ENCODE measurements at regions of chr5 and their contacts with region 1.

Region 1: DNA sequence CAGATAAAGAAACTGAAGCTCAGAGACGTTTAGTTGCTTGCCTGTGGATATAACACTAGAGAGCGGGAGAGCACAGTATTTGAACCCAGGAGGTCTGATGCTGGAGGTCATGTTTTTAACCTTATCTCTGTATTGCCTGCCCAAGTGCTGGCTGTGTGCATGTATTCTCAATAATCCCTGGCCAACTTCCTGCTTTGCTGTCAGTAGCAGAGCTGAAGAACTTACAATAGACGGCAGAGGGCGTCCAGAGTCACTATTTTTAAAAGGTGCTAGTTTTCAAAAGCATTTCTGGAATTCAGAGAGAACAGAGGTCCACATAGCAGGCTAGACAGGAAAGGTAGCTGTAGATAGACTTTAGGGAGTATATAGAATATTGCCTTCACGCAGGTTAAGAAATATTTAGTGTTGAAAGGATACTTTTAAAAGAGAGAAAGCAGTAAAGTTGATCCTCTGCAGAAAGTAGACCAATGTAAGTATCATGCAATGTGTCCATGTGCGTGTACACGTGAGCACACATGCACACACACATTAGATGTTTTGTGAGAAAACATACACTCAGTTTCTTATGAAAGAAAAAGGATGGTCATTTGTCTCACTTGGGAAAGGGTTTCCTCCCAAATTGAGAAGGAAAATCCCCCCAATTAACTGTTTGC is 46.3 kb downstream of the PTCD2 start:
- DNase-seq: peak; percentile 87
- H3K4me3 ChIP-seq: no peak overlapping the region
- H3K27ac ChIP-seq: peak overlapping the region; percentile 23
- H3K4me1 ChIP-seq: peaks cover 23% of the 10 kb centered on the region
- H3K27me3 ChIP-seq: no peaks in the 10 kb centered on the region
- CTCF ChIP-seq: peak; percentile 66 to 76
- POLR2A ChIP-seq: no peak

Region 2: GRCh38 chr5:72093217-72093616 is 273.2 kb before region 1 on chr5:
- CTCF ChIA-PET with region 1: no interaction called
- POLR2A ChIA-PET with region 1: no interaction called
- dilution Hi-C with region 1: no loop called
- intact Hi-C with region 1: no loop called
- DNase-seq: no peak
- H3K4me3 ChIP-seq: no peak overlapping the region
- H3K27ac ChIP-seq: no peak overlapping the region
- H3K4me1 ChIP-seq: no peaks in the 10 kb centered on the region
- H3K27me3 ChIP-seq: peaks cover 2 to 4% of the 10 kb centered on the region in 2 experiments
- CTCF ChIP-seq: no peak
- POLR2A ChIP-seq: no peak

Region 3: DNA sequence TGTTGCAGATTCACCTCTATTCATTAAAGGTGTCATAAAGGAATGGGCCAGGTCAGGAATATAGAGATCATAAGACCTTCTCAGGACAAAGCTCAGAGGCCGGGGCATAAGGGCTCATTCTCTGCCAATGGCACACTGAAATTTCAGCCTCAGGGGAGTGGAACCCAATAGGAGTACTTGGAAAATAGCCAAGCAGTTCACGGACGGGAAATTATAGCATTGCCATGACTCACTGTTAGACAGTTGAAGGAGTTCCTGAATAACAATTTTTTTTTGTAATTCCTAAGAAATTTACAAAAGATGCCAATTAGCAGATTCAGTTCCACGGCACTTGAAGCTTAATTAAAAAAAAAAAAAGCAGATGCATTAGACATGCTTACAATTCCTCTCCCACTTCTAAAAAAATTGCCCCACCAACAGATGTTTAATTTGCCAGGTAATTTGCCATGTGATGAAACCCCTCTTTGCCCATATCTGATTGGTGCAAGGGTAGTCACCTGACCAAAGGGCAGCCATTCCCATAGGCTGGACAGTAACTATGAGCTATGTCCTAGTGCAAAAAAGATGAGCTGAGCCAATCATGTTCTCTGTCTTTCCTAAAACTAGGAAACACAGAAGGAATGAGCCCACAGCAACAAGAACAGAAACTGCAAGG is 12.3 kb after region 1 on chr5:
- CTCF ChIA-PET with region 1: interaction called, 29 read pairs
- POLR2A ChIA-PET with region 1: no interaction called
- dilution Hi-C with region 1: no loop called
- intact Hi-C with region 1: no loop called
- DNase-seq: peak; percentile 96
- H3K4me3 ChIP-seq: no peak overlapping the region
- H3K27ac ChIP-seq: peak overlapping the region; percentile 30
- H3K4me1 ChIP-seq: peaks cover 15% of the 10 kb centered on the region
- H3K27me3 ChIP-seq: no peaks in the 10 kb centered on the region
- CTCF ChIP-seq: no peak
- POLR2A ChIP-seq: no peak

Region 4: DNA sequence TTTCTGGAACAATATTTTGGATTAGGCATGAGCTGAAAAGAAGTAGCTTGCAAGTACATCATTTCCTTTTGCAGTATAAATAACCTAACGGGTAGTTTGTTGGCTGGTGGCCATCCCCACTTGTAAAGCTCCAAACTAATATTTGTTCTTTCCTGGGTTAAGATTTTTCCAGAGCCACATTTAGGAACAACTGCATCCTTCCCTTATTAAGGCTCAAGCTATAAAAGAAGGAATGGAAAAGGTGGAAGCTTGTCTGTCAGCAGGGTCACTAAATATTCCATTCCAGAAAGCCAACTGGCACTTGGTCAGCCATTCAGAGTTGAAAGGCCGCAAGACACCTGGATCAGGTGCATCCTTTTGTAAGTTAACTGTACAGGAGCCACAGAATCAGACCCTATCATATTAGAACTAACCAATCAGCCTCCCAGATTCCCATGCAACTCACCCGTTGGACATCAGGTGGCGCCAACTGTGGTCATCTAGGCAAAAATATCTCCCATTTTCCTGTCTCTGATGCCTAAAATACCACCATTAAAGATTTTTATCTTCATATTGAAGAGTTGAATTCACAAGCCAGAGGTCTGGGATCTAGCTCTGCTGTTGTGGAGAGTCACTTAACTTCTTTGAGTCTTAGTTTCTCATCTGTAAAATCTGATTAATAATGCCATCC is 36.6 kb after region 1 on chr5:
- CTCF ChIA-PET with region 1: interaction called, 11 read pairs
- POLR2A ChIA-PET with region 1: no interaction called
- dilution Hi-C with region 1: no loop called
- intact Hi-C with region 1: no loop called
- DNase-seq: peak; percentile 78
- H3K4me3 ChIP-seq: no peak overlapping the region
- H3K27ac ChIP-seq: no peak overlapping the region
- H3K4me1 ChIP-seq: no peaks in the 10 kb centered on the region
- H3K27me3 ChIP-seq: no peaks in the 10 kb centered on the region
- CTCF ChIP-seq: peak; percentile 34 to 35
- POLR2A ChIP-seq: no peak

Region 5: GRCh38 chr5:72510610-72511181 is 144.2 kb after region 1 on chr5:
- CTCF ChIA-PET with region 1: interaction called, 19 read pairs
- POLR2A ChIA-PET with region 1: no interaction called
- dilution Hi-C with region 1: no loop called
- intact Hi-C with region 1: no loop called
- DNase-seq: peak; percentile 80
- H3K4me3 ChIP-seq: no peak overlapping the region
- H3K27ac ChIP-seq: peak overlapping the region; percentile 65
- H3K4me1 ChIP-seq: peaks cover 49% of the 10 kb centered on the region
- H3K27me3 ChIP-seq: no peaks in the 10 kb centered on the region
- CTCF ChIP-seq: no peak
- POLR2A ChIP-seq: no peak

Region 6: DNA sequence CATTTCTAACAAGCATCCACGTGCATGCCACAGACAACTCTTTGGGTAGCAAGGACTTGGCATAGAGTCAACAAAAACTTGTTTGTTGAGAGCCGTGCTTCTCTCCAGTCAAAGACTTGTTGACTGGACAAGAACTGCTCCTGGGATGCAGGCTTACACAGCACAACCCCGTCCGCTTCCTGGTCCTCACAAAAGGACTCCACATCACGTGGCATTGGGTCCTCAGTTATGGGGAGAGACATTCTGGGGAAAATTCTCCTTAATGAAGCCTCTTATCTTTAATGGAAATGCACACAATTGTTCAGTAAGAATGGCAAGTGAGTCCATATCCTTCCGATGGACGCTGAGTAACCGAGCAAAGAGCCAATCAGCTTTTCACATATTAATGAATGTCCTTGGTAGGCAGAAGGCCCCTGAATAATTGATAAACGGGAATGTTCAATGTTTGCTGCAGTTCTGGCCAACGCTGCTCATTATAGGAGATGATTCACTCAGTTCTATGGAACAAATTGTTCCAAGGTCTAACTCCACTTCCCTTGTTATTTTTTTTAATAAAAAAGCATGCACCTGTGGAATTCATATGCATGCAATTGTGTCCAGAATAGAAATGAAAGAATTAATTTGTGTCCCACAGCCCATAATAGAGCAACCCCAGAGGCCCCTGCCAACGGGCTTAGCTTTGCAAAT is 237.8 kb after region 1 on chr5:
- CTCF ChIA-PET with region 1: interaction called, 16 read pairs
- POLR2A ChIA-PET with region 1: no interaction called
- dilution Hi-C with region 1: no loop called
- intact Hi-C with region 1: loop called (anchors 1 kb)
- DNase-seq: peak; percentile 99
- H3K4me3 ChIP-seq: no peak overlapping the region
- H3K27ac ChIP-seq: peak overlapping the region; percentile 97
- H3K4me1 ChIP-seq: peaks cover 64% of the 10 kb centered on the region
- H3K27me3 ChIP-seq: no peaks in the 10 kb centered on the region
- CTCF ChIP-seq: no peak
- POLR2A ChIP-seq: peak; percentile 25

Region 7: DNA sequence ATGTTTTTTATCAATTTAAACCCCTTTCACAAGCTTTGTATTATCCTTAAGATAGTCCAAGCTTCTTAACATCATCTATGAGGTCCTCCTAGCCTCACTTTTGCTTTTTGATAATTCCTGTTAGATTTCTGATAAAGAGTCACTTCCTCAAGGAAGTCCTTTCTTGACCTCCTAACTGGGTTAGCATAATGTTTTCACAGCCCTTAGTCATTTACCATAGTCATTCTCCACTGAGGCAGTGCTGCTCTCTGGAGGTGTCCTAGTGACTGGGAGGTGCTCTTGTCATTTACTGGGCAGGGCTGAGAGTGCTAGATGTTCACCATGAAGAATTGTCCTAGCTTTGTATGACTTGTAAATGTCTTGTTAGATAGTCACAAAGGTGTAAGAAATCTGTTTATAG is 476.4 kb after region 1 on chr5:
- CTCF ChIA-PET with region 1: interaction called, 4 read pairs
- POLR2A ChIA-PET with region 1: no interaction called
- dilution Hi-C with region 1: no loop called
- intact Hi-C with region 1: loop called (anchors 2 kb)
- DNase-seq: peak; percentile 92
- H3K4me3 ChIP-seq: peak overlapping the region in 1 of 3 experiments; percentile 25
- H3K27ac ChIP-seq: peak overlapping the region; percentile 95
- H3K4me1 ChIP-seq: peaks cover 70% of the 10 kb centered on the region
- H3K27me3 ChIP-seq: no peaks in the 10 kb centered on the region
- CTCF ChIP-seq: peak in 1 of 2 donors; percentile 11
- POLR2A ChIP-seq: no peak

Region 8: GRCh38 chr5:72917371-72917776 is 550.9 kb after region 1 on chr5:
- CTCF ChIA-PET with region 1: no interaction called
- POLR2A ChIA-PET with region 1: no interaction called
- dilution Hi-C with region 1: no loop called
- intact Hi-C with region 1: no loop called
- DNase-seq: no peak
- H3K4me3 ChIP-seq: no peak overlapping the region
- H3K27ac ChIP-seq: no peak overlapping the region
- H3K4me1 ChIP-seq: no peaks in the 10 kb centered on the region
- H3K27me3 ChIP-seq: no peaks in the 10 kb centered on the region
- CTCF ChIP-seq: no peak
- POLR2A ChIP-seq: peak; percentile 69

Measured in endothelial cell of umbilical vein (primary cell).